ENCODE measurements at regions of chr3 and their contacts with region 1.

Region 1: DNA sequence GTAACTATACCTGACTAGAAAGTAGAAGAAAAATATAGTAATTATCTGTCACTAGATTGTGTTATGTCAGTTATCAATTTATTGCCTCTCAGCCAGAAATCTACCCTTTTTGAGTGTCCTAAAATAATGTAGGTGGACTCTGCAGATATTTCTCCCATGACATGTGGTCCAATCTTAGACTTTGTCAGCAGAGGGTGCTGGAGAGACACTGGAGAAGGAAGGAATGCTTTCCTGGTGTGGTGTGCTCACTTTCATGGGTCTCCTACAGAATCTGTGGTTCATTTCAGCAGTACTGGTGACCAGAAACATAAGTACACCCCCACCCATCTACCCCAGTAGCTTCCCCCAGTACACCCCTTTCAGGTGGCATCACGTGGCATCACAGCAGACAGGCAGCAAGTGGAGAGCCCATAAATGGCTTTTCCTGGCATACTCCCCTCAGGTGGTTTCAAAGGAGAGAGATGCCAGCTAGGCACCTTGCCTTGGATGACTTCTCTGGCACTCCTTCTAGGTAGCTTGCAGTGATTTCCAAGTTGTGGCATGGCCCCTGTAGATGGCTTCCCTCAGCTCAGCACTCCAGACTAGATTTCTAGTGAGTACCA is 114.7 kb downstream of the GADL1 start:
- DNase-seq: peak; percentile 72
- ATAC-seq: no peak
- H3K4me3 ChIP-seq: no peak overlapping the region
- H3K27ac ChIP-seq: no peak overlapping the region
- H3K4me1 ChIP-seq: peaks cover 21% of the 10 kb centered on the region
- H3K27me3 ChIP-seq: no peaks in the 10 kb centered on the region
- CTCF ChIP-seq: peak; percentile 80

Region 2: GRCh38 chr3:30356866-30357753 is 422.7 kb before region 1 on chr3:
- CTCF ChIA-PET with region 1: no interaction called
- POLR2A ChIA-PET with region 1: no interaction called
- intact Hi-C with region 1: no loop called
- DNase-seq: peak; percentile 93
- ATAC-seq: peak; percentile 64
- H3K4me3 ChIP-seq: peak overlapping the region; percentile 17; the same call in 1 of the 2 replicates
- H3K27ac ChIP-seq: peak overlapping the region; percentile 97
- H3K4me1 ChIP-seq: peaks cover 76% of the 10 kb centered on the region
- H3K27me3 ChIP-seq: no peaks in the 10 kb centered on the region
- CTCF ChIP-seq: no peak

Region 3: DNA sequence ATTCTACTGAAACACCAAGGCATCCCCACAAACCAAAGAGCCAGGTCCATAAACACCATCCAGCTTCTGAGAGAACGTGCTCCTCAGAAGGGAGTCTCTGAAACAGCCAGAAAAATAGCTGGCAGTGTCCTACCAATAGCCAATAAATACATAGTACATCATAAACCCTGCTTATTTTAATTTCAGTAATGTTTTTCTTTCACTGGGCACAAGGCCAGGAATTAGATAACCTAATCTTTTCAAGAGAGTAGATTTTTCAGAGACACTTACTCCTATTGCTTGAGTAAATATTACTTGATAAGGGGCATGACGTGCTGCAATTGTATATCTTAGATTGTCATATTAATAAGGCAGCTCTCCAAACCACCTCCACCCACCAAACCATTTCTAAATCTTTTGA is 91.9 kb after region 1 on chr3:
- CTCF ChIA-PET with region 1: no interaction called
- POLR2A ChIA-PET with region 1: no interaction called
- intact Hi-C with region 1: no loop called
- DNase-seq: no peak
- ATAC-seq: no peak
- H3K4me3 ChIP-seq: no peak overlapping the region
- H3K27ac ChIP-seq: no peak overlapping the region
- H3K4me1 ChIP-seq: no peaks in the 10 kb centered on the region
- H3K27me3 ChIP-seq: no peaks in the 10 kb centered on the region
- CTCF ChIP-seq: no peak

Region 4: DNA sequence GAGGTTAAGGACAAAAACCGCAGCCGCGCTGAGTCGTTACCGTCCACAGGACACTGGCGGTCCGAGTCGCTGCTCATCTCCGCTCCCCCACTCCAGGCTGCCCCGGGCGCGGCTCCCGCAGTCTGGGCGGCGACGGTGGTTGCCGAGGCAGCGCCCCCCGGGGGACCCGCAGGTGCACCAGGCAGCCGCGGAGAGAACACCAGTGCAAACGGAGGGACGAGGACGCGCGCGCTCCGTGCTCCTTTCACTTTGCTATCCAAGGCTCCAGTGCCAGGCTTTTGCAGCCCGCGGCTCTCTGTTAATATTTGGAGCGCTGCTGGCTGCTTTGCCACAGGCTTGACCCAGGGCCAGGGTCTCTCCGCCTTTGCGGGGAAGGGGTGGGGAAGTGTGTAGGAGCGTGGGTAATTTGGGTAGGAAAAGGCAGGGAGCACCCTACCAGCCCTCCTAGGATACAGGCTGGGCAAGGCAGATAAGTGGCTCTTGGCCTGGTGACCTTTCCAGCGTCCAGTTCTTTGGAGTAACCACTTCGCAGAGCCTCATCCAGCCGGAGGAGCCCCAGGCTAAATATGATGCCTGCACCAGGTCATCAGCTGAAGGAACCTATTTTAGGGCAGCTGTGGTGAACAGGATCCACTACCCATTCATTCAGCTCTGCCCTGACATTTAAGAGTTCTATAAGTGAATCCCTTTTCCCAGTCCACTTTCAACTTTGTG is 114.9 kb after region 1 on chr3 and contains the start of gene GADL1:
- CTCF ChIA-PET with region 1: no interaction called
- POLR2A ChIA-PET with region 1: no interaction called
- intact Hi-C with region 1: loop called (anchors 5 kb)
- DNase-seq: peak; percentile 36
- ATAC-seq: peak; percentile 80
- H3K4me3 ChIP-seq: peak within 1 kb of the TSS; percentile 79
- H3K27ac ChIP-seq: no peak within 1 kb of the TSS
- H3K4me1 ChIP-seq: peaks cover 5% of the 10 kb centered on the region; the same call in 1 of the 2 replicates
- H3K27me3 ChIP-seq: peaks cover 14% of the 10 kb centered on the region
- CTCF ChIP-seq: no peak; the same call in 1 of the 2 replicates
- total RNA-seq, gene GADL1: not detected in 2 replicates

Region 5: DNA sequence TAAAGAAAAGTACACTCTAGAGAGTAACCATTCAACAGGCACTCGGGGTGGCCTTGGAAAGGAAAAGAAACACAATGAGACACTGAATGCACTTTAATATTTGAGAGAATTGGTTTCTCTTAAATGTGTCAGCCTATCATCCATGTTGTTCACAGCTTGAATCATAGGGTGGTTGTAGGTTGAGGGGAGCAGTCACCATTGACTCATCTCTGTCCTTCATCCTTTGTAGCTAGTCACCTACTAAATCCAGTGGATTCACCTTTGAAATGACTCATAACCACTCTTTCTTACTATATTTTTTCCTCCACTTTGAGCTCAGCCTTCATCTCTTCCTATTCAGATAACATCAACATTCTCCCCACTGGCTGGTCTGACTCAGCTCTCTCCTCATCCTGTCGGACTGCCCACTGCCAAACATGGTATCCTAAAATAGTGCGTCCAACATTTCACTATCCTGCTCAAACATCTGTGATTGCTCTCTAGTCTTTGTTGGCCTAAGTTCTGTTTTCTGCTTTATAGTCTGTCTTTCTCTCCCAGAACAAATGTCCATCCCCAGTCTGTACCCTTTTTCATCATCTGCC is 297.3 kb after region 1 on chr3:
- CTCF ChIA-PET with region 1: no interaction called
- POLR2A ChIA-PET with region 1: no interaction called
- intact Hi-C with region 1: loop called (anchors 1 kb)
- DNase-seq: peak; percentile 97
- ATAC-seq: peak; percentile 96
- H3K4me3 ChIP-seq: peak overlapping the region; percentile 20
- H3K27ac ChIP-seq: peak overlapping the region; percentile 96
- H3K4me1 ChIP-seq: peaks cover 44% of the 10 kb centered on the region
- H3K27me3 ChIP-seq: no peaks in the 10 kb centered on the region
- CTCF ChIP-seq: no peak

Region 6: GRCh38 chr3:31377045-31377642 is 597.4 kb after region 1 on chr3:
- CTCF ChIA-PET with region 1: no interaction called
- POLR2A ChIA-PET with region 1: no interaction called
- intact Hi-C with region 1: loop called (anchors 10 kb)
- DNase-seq: peak; percentile 98
- ATAC-seq: peak; percentile 99
- H3K4me3 ChIP-seq: no peak overlapping the region
- H3K27ac ChIP-seq: peak overlapping the region; percentile 44
- H3K4me1 ChIP-seq: peaks cover 19% of the 10 kb centered on the region
- H3K27me3 ChIP-seq: no peaks in the 10 kb centered on the region
- CTCF ChIP-seq: no peak